ENCODE measurements at regions of chr21 and their contacts with region 1.

Region 1: GRCh38 chr21:42460391-42461204 is 35.4 kb downstream of the RSPH1 start:
- DNase-seq: peak; percentile 94
- ATAC-seq: peak; percentile 69
- H3K4me3 ChIP-seq: peak overlapping the region in 4 of 5 experiments; percentile 20 to 67 (median 40)
- H3K4me3 Mint-ChIP-seq: peak overlapping the region; percentile 88
- H3K27ac ChIP-seq: peak overlapping the region; percentile 83 to 93
- H3K27ac Mint-ChIP-seq: peak overlapping the region; percentile 99
- H3K4me1 ChIP-seq: peaks cover 60% of the 10 kb centered on the region in 2 donors
- H3K4me1 Mint-ChIP-seq: peaks cover 59% of the 10 kb centered on the region
- H3K27me3 ChIP-seq: no peaks in the 10 kb centered on the region
- H3K27me3 Mint-ChIP-seq: no peaks in the 10 kb centered on the region
- CTCF ChIP-seq: no peak

Region 2: DNA sequence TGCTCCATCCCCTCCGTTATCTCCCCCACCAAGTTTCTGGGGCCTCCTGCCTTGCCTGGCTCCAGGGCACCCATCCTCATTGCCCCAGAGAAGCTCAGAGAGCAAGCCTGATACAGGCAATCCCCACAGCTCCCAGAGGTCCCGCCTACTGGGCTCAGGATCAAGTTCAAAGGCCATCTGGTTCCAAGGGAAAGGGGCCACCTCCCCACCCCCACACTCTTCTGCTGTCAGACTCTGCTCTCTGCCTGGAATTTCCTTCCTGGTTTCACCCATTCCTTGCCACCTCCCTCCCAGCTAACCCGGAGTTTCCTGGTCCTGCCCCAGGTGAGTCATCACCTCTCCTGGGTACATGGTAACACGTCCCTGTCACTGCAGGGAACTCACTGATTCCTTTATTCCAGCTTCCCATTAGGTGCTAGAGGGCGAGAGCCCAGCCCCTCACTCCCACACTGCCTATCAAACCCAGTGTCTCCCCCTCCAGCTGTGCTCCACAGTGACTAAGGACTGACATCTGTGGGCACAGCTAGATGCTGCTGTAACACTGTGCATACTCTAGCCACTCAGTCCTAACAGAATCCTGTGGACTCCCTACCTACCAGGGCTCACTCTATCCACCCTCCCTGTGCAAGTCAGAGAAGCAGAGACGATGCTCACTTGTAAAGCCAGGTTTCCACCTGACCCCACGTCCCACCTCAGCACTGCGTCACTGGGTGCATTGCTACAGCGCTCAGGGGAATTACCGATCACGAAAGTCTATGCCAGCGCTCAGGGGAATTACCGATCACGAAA is 13.6 kb after region 1 on chr21:
- CTCF ChIA-PET with region 1: interaction called, 3 read pairs
- POLR2A ChIA-PET with region 1: no interaction called
- intact Hi-C with region 1: loop called (anchors 2 kb)
- DNase-seq: peak; percentile 90
- ATAC-seq: peak; percentile 92
- H3K4me3 ChIP-seq: no peak overlapping the region
- H3K4me3 Mint-ChIP-seq: peak overlapping the region; percentile 59
- H3K27ac ChIP-seq: no peak overlapping the region
- H3K27ac Mint-ChIP-seq: peak overlapping the region; percentile 66
- H3K4me1 ChIP-seq: peaks cover 3 to 55% of the 10 kb centered on the region in 2 donors
- H3K4me1 Mint-ChIP-seq: peaks cover 12% of the 10 kb centered on the region
- H3K27me3 ChIP-seq: peaks cover 0 to 20% (median 3%) of the 10 kb centered on the region in 4 experiments
- H3K27me3 Mint-ChIP-seq: peaks cover 22% of the 10 kb centered on the region
- CTCF ChIP-seq: no peak

Region 3: GRCh38 chr21:42524349-42525151 is 64.0 kb after region 1 on chr21:
- CTCF ChIA-PET with region 1: interaction called, 3 read pairs
- POLR2A ChIA-PET with region 1: no interaction called
- intact Hi-C with region 1: loop called (anchors 1 kb)
- DNase-seq: peak; percentile 96
- ATAC-seq: peak; percentile 85
- H3K4me3 ChIP-seq: peak overlapping the region in 4 of 5 experiments; percentile 29 to 65 (median 41)
- H3K4me3 Mint-ChIP-seq: peak overlapping the region; percentile 88
- H3K27ac ChIP-seq: peak overlapping the region; percentile 97 to 99
- H3K27ac Mint-ChIP-seq: peak overlapping the region; percentile 99
- H3K4me1 ChIP-seq: peaks cover 54 to 59% of the 10 kb centered on the region in 2 donors
- H3K4me1 Mint-ChIP-seq: peaks cover 78% of the 10 kb centered on the region
- H3K27me3 ChIP-seq: no peaks in the 10 kb centered on the region
- H3K27me3 Mint-ChIP-seq: no peaks in the 10 kb centered on the region
- CTCF ChIP-seq: no peak

Measured in B cell (primary cell).